ENCODE measurements at regions of chr18 and their contacts with region 1.

Region 1: DNA sequence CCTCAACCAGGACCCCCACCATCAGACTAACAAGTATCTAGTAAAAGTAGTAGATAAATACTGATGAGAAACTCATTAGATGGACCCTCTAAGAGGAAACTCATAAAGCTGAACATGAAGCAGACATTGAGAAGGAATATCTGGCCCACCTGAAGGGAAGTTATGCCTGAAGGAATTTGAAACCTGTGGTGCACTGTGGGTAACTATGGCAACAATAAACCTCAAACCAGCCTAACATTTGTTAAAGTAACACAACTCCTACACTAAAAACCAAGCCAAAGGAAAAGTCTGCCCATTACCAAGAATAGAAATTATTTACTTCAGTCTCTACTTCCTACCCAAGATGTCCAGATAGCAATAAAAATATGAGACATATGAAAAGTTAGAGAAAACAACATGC is 43.4 kb downstream of the KIAA1328 start:
- DNase-seq: no peak

Region 2: GRCh38 chr18:36798738-36799473 is 73.4 kb before region 1 on chr18:
- intact Hi-C with region 1: no loop called
- DNase-seq: no peak

Region 3: GRCh38 chr18:37042381-37042780 is 170.1 kb after region 1 on chr18:
- intact Hi-C with region 1: loop called in 1 of 2 experiments (anchors 5 kb)
- DNase-seq: no peak

Measured in posterior vena cava (tissue), 2 donors.